ENCODE measurements at regions of chr18 and their contacts with region 1.

Region 1: GRCh38 chr18:48951448-48952286 is 902 bp upstream of the SMAD7 start:
- DNase-seq: peak; percentile 92
- ATAC-seq: peak; percentile 76 to 78

Region 2: GRCh38 chr18:48680339-48681221 is 271.1 kb before region 1 on chr18:
- intact Hi-C with region 1: loop called in 1 of 2 experiments (anchors 10 kb)
- DNase-seq: peak; percentile 94
- ATAC-seq: peak; percentile 91

Region 3: GRCh38 chr18:49055754-49056172 is 104.1 kb after region 1 on chr18:
- intact Hi-C with region 1: loop called in 1 of 2 experiments (anchors 10 kb)
- DNase-seq: peak; percentile 83
- ATAC-seq: peak; percentile 75 to 83

Region 4: GRCh38 chr18:49178736-49179135 is 227.1 kb after region 1 on chr18:
- intact Hi-C with region 1: loop called in 1 of 2 experiments (anchors 10 kb)
- DNase-seq: peak; percentile 34
- ATAC-seq: peak in 1 of 2 donors; percentile 41

Measured in left cardiac atrium (tissue), 4 donors.